ENCODE measurements at regions of chr12 and their contacts with region 1.

Region 1: GRCh38 chr12:102163383-102163782 is 34.2 kb downstream of the PMCH start:
- DNase-seq: no peak
- H3K4me3 ChIP-seq: no peak overlapping the region
- H3K27ac ChIP-seq: no peak overlapping the region
- H3K4me1 ChIP-seq: no peaks in the 10 kb centered on the region
- H3K27me3 ChIP-seq: no peaks in the 10 kb centered on the region
- CTCF ChIP-seq: no peak
- EP300 ChIP-seq: no peak
- POLR2A ChIP-seq: no peak

Region 2: DNA sequence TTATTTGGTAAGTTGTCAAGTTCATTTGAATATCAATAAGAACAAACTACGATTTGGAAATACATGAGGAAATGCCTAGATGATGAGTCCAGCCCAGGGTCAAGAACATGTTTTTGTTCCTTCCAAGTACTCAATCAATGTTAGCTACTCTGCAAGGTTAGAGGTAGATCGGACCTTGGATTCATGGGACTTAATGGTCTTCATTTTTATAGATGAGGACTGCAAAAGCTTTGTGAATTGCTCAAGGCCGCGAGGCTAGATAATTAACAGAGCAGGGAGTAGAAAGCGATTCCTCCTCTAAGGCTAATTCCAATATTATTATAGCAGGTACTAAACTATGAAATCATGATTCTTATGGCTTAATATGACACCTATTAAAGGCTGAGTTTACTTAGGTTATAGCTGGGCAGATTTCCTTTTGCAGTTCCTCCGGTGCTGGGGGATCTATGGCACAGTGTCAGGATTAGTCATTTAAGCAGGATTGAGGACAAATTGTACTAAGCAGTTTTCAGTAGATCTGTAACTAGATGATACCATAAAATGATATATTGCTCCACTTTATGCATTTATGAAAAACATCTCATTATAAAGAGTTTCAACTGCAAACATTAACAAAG is 1669.9 kb before region 1 on chr12:
- intact Hi-C with region 1: loop called in 1 of 4 experiments (anchors 5 kb)
- DNase-seq: no peak
- H3K4me3 ChIP-seq: no peak overlapping the region
- H3K27ac ChIP-seq: no peak overlapping the region
- H3K4me1 ChIP-seq: peaks cover 10% of the 10 kb centered on the region
- H3K27me3 ChIP-seq: no peaks in the 10 kb centered on the region
- CTCF ChIP-seq: no peak
- EP300 ChIP-seq: no peak
- POLR2A ChIP-seq: no peak

Region 3: DNA sequence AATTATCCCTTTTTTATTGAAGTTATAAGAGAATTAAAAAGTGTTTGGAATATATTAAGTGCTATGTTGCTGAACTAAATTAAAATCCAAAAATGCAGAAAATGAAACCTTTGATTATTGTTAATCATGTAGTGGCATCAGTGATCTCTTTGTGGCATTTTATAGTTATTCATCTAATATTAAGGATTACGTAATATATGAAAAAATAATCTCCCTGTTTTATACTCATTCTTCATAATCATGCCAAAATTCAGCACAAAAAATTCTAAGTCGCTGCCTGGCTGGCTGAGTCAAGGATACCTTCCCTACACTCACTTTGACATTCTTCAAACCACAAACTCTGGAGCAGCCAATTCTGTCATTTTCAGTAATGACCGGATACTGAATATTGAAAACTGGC is 819.5 kb before region 1 on chr12:
- intact Hi-C with region 1: no loop called
- DNase-seq: no peak
- H3K4me3 ChIP-seq: no peak overlapping the region
- H3K27ac ChIP-seq: no peak overlapping the region
- H3K4me1 ChIP-seq: no peaks in the 10 kb centered on the region
- H3K27me3 ChIP-seq: no peaks in the 10 kb centered on the region
- CTCF ChIP-seq: no peak
- EP300 ChIP-seq: no peak
- POLR2A ChIP-seq: no peak